Adrenal gland (tissue), 19 donors: ENCODE measurements at regions of chr18 and their contacts with region 1.

Region 1: GRCh38 chr18:79890674-79891073 is 60.8 kb downstream of the SLC66A2 start:
- DNase-seq: no peak
- H3K4me3 ChIP-seq: no peak overlapping the region
- H3K27ac ChIP-seq: no peak overlapping the region
- H3K4me1 ChIP-seq: no peaks in the 10 kb centered on the region
- H3K27me3 ChIP-seq: no peaks in the 10 kb centered on the region
- CTCF ChIP-seq: no peak
- POLR2A ChIP-seq: no peak

Region 2: GRCh38 chr18:79699653-79700052 is 191.0 kb before region 1 on chr18:
- intact Hi-C with region 1: loop called in 1 of 2 experiments (anchors 5 kb)
- DNase-seq: no peak
- H3K4me3 ChIP-seq: no peak overlapping the region
- H3K27ac ChIP-seq: no peak overlapping the region
- H3K4me1 ChIP-seq: no peaks in the 10 kb centered on the region
- H3K27me3 ChIP-seq: no peaks in the 10 kb centered on the region
- CTCF ChIP-seq: no peak
- POLR2A ChIP-seq: no peak

Region 3: DNA sequence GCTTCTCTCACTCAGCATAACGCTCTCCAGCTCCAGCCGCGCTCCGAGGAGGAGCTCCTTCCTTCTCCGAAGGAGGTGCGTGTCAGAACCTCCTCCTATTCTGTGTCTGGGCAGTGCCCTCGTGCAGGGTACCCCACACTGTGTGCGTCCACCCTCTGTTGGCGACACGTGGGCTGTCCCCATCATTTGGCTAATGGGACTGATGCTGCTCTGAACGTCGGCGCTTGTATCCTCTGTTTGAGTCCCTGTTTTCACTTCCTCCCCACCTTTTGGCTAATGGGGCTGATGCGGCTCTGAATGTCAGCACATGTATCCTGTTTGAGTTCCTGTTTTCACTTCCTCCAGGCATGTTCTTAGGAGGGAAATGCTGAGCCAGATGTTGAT is 70.7 kb before region 1 on chr18:
- intact Hi-C with region 1: no loop called
- DNase-seq: peak in 4 of 7 donors; percentile 24 to 57 (median 40)
- H3K4me3 ChIP-seq: no peak overlapping the region
- H3K27ac ChIP-seq: no peak overlapping the region
- H3K4me1 ChIP-seq: no peaks in the 10 kb centered on the region
- H3K27me3 ChIP-seq: no peaks in the 10 kb centered on the region
- CTCF ChIP-seq: no peak
- POLR2A ChIP-seq: no peak

Region 4: GRCh38 chr18:79982734-79983133 is 92.1 kb after region 1 on chr18:
- intact Hi-C with region 1: no loop called
- DNase-seq: peak in 2 of 7 donors; percentile 28 to 48
- H3K4me3 ChIP-seq: no peak overlapping the region
- H3K27ac ChIP-seq: no peak overlapping the region
- H3K4me1 ChIP-seq: peaks cover 9 to 31% of the 10 kb centered on the region in 2 donors
- H3K27me3 ChIP-seq: no peaks in the 10 kb centered on the region
- CTCF ChIP-seq: no peak
- POLR2A ChIP-seq: no peak